A673 (cell line): ENCODE measurements at regions of chr7 and their contacts with region 1.

Region 1: GRCh38 chr7:116588641-116589594 is 64.1 kb downstream of the CAV1 start:
- DNase-seq: peak; percentile 90
- H3K4me3 ChIP-seq: no peak overlapping the region
- H3K27ac ChIP-seq: peak overlapping the region; percentile 55
- H3K4me1 ChIP-seq: peaks cover 71% of the 10 kb centered on the region
- H3K27me3 ChIP-seq: no peaks in the 10 kb centered on the region
- CTCF ChIP-seq: peak; percentile 73

Region 2: GRCh38 chr7:116180302-116180701 is 408.6 kb before region 1 on chr7:
- CTCF ChIA-PET with region 1: interaction called, 22 read pairs
- POLR2A ChIA-PET with region 1: no interaction called
- intact Hi-C with region 1: no loop called
- DNase-seq: peak; percentile 83
- H3K4me3 ChIP-seq: no peak overlapping the region
- H3K27ac ChIP-seq: no peak overlapping the region
- H3K4me1 ChIP-seq: no peaks in the 10 kb centered on the region
- H3K27me3 ChIP-seq: no peaks in the 10 kb centered on the region
- CTCF ChIP-seq: peak; percentile 82

Region 3: DNA sequence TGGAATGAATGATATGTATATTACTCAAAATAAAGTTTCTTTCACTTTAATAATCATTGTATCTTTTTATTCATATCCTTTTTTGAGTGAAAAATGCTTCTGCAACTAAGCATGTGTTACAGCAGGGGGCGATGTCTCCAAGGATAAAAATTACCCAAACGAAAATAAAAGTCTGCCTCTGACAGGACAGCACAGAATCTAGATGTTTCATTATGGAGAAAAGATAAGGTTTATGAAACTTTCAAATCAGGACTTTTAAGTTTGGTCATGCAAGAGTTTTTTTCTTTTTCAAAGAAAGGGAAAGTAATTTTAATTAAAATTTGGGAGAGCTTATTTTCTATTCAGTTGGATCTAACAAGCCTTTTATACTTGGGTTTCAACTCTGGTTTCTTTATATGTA is 330.2 kb before region 1 on chr7:
- CTCF ChIA-PET with region 1: interaction called, 13 read pairs
- POLR2A ChIA-PET with region 1: interaction called, 3 read pairs
- intact Hi-C with region 1: loop called (anchors 2 kb)
- DNase-seq: peak; percentile 86
- H3K4me3 ChIP-seq: no peak overlapping the region
- H3K27ac ChIP-seq: peak overlapping the region; percentile 79
- H3K4me1 ChIP-seq: peaks cover 36% of the 10 kb centered on the region
- H3K27me3 ChIP-seq: no peaks in the 10 kb centered on the region
- CTCF ChIP-seq: peak; percentile 87

Region 4: DNA sequence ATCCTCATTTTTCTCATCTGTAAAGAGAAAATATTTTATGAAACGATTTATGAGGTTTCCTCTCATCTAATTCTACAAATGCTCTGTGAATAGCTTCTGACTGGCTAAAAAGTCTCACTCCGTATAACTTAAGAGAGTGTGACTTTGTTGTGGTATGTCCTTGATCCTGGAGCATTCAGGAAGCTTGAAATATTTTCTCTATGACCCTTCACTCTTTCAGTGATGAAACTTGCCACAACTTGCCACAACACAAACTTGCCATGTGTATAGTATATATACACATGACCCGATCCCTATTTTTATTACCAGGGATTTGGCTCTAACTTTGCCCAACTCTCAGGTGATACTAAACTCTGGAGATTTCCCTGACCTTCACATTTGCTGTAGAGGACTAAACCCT is 304.5 kb before region 1 on chr7:
- CTCF ChIA-PET with region 1: no interaction called
- POLR2A ChIA-PET with region 1: no interaction called
- intact Hi-C with region 1: no loop called
- DNase-seq: no peak
- H3K4me3 ChIP-seq: no peak overlapping the region
- H3K27ac ChIP-seq: no peak overlapping the region
- H3K4me1 ChIP-seq: peaks cover 7% of the 10 kb centered on the region
- H3K27me3 ChIP-seq: no peaks in the 10 kb centered on the region
- CTCF ChIP-seq: no peak

Region 5: DNA sequence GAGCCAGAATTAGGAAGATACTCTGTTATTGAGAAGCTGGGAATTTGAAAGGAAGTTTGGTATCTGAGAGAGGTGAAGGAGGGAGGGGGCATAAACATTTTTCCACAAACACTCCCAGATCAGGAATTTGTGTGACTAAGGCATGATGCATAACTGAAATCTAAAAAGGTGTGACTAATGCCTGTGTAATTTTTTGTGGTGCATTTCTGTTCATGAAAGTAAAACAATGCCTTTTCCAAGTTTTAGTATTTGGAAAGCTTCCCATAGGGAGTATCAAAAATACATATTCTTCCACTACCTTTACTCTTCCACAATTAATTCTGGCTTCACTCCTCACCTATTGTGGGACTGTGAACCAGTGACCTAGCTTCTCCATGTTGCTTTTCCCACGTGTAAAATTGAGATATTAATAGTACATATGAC is 145.8 kb before region 1 on chr7:
- CTCF ChIA-PET with region 1: no interaction called
- POLR2A ChIA-PET with region 1: interaction called, 5 read pairs
- intact Hi-C with region 1: loop called (anchors 10 kb)
- DNase-seq: peak; percentile 58
- H3K4me3 ChIP-seq: no peak overlapping the region
- H3K27ac ChIP-seq: peak overlapping the region; percentile 78
- H3K4me1 ChIP-seq: peaks cover 72% of the 10 kb centered on the region
- H3K27me3 ChIP-seq: no peaks in the 10 kb centered on the region
- CTCF ChIP-seq: no peak

Region 6: DNA sequence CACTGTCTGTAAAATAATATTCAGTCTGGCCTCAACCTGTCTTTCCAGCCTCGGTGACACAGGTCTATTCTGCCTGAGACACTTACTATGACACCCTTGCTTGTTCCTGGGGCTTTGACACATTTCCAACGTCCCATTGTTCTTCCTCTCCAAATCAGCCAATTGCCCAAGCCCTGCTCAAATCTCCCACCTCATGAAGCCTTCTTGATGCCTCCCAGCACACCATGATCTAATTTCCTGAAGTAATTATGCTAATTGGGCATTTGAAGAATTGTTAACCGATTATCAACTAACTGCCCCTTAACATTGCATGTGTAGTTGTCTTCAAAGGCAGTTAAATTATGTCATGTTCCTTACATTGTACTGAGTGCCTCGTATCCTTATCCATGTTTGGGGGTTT is 31.0 kb before region 1 on chr7:
- CTCF ChIA-PET with region 1: interaction called, 3 read pairs
- POLR2A ChIA-PET with region 1: no interaction called
- intact Hi-C with region 1: loop called (anchors 2 kb)
- DNase-seq: peak; percentile 95
- H3K4me3 ChIP-seq: no peak overlapping the region
- H3K27ac ChIP-seq: peak overlapping the region; percentile 49
- H3K4me1 ChIP-seq: peaks cover 87% of the 10 kb centered on the region
- H3K27me3 ChIP-seq: no peaks in the 10 kb centered on the region
- CTCF ChIP-seq: no peak

Region 7: GRCh38 chr7:116786791-116787443 is 198.0 kb after region 1 on chr7:
- CTCF ChIA-PET with region 1: interaction called, 13 read pairs
- POLR2A ChIA-PET with region 1: no interaction called
- intact Hi-C with region 1: loop called (anchors 5 kb)
- DNase-seq: peak; percentile 61
- H3K4me3 ChIP-seq: no peak overlapping the region
- H3K27ac ChIP-seq: no peak overlapping the region
- H3K4me1 ChIP-seq: peaks cover 13% of the 10 kb centered on the region
- H3K27me3 ChIP-seq: no peaks in the 10 kb centered on the region
- CTCF ChIP-seq: peak; percentile 64

Region 8: GRCh38 chr7:117202511-117202910 is 613.6 kb after region 1 on chr7:
- CTCF ChIA-PET with region 1: no interaction called
- POLR2A ChIA-PET with region 1: no interaction called
- intact Hi-C with region 1: no loop called
- DNase-seq: no peak
- H3K4me3 ChIP-seq: no peak overlapping the region
- H3K27ac ChIP-seq: no peak overlapping the region
- H3K4me1 ChIP-seq: peaks cover 21% of the 10 kb centered on the region
- H3K27me3 ChIP-seq: no peaks in the 10 kb centered on the region
- CTCF ChIP-seq: no peak